Ascending aorta (tissue), 2 donors: ENCODE measurements at regions of chr13 and their contacts with region 1.

Region 1: GRCh38 chr13:38933777-38934176 is 56.9 kb downstream of the STOML3 start:
- DNase-seq: no peak
- H3K4me3 ChIP-seq: no peak overlapping the region
- H3K27ac ChIP-seq: no peak overlapping the region
- H3K4me1 ChIP-seq: no peaks in the 10 kb centered on the region
- H3K27me3 ChIP-seq: no peaks in the 10 kb centered on the region
- CTCF ChIP-seq: no peak

Region 2: GRCh38 chr13:37460166-37460565 is 1473.6 kb before region 1 on chr13:
- intact Hi-C with region 1: loop called (anchors 10 kb)
- DNase-seq: no peak
- H3K4me3 ChIP-seq: no peak overlapping the region
- H3K27ac ChIP-seq: no peak overlapping the region
- H3K4me1 ChIP-seq: no peaks in the 10 kb centered on the region
- H3K27me3 ChIP-seq: no peaks in the 10 kb centered on the region
- CTCF ChIP-seq: no peak

Region 3: GRCh38 chr13:38990693-38991092 is 56.9 kb after region 1 on chr13 and contains the start of gene STOML3:
- intact Hi-C with region 1: no loop called
- DNase-seq: no peak
- H3K4me3 ChIP-seq: no peak within 1 kb of the TSS
- H3K27ac ChIP-seq: no peak within 1 kb of the TSS
- H3K4me1 ChIP-seq: no peaks in the 10 kb centered on the region
- H3K27me3 ChIP-seq: no peaks in the 10 kb centered on the region
- CTCF ChIP-seq: no peak
- total RNA-seq, gene STOML3: not detected